Activated B cell treated with CpG ODN at 0.5 μM for 24 hours (primary cell): ENCODE measurements at regions of chr16 and their contacts with region 1.

Region 1: DNA sequence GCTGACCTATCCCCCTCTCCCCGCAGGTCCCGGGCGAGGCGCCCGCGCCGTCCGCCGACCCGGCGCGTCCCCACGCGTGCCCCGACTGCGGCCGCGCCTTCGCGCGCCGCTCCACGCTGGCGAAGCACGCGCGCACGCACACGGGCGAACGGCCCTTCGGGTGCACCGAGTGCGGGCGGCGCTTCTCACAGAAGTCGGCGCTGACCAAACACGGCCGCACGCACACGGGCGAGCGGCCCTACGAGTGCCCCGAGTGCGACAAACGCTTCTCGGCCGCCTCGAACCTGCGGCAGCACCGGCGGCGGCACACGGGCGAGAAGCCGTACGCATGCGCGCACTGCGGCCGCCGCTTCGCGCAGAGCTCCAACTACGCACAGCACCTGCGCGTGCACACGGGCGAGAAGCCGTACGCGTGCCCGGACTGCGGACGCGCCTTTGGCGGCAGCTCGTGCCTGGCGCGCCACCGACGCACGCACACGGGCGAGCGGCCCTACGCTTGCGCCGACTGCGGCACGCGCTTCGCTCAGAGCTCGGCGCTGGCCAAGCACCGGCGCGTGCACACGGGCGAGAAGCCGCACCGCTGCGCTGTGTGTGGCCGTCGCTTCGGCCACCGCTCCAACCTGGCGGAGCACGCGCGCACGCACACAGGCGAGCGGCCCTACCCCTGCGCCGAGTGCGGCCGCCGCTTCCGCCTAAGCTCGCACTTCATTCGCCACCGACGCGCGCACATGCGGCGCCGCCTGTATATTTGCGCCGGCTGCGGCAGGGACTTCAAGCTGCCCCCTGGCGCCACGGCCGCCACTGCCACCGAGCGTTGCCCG is 10.3 kb downstream of the ZNF771 start:
- DNase-seq: peak; percentile 84
- ATAC-seq: peak; percentile 86
- H3K4me3 Mint-ChIP-seq: peak overlapping the region; percentile 71
- H3K27ac Mint-ChIP-seq: peak overlapping the region; percentile 69
- H3K4me1 Mint-ChIP-seq: peaks cover 12% of the 10 kb centered on the region
- H3K27me3 Mint-ChIP-seq: no peaks in the 10 kb centered on the region
- CTCF ChIP-seq: no peak

Region 2: GRCh38 chr16:30142672-30143346 is 274.9 kb before region 1 on chr16:
- CTCF ChIA-PET with region 1: no interaction called
- POLR2A ChIA-PET with region 1: no interaction called
- intact Hi-C with region 1: no loop called
- DNase-seq: no peak
- ATAC-seq: peak; percentile 57
- H3K4me3 Mint-ChIP-seq: no peak overlapping the region
- H3K27ac Mint-ChIP-seq: no peak overlapping the region
- H3K4me1 Mint-ChIP-seq: peaks cover 12% of the 10 kb centered on the region
- H3K27me3 Mint-ChIP-seq: no peaks in the 10 kb centered on the region
- CTCF ChIP-seq: no peak

Region 3: DNA sequence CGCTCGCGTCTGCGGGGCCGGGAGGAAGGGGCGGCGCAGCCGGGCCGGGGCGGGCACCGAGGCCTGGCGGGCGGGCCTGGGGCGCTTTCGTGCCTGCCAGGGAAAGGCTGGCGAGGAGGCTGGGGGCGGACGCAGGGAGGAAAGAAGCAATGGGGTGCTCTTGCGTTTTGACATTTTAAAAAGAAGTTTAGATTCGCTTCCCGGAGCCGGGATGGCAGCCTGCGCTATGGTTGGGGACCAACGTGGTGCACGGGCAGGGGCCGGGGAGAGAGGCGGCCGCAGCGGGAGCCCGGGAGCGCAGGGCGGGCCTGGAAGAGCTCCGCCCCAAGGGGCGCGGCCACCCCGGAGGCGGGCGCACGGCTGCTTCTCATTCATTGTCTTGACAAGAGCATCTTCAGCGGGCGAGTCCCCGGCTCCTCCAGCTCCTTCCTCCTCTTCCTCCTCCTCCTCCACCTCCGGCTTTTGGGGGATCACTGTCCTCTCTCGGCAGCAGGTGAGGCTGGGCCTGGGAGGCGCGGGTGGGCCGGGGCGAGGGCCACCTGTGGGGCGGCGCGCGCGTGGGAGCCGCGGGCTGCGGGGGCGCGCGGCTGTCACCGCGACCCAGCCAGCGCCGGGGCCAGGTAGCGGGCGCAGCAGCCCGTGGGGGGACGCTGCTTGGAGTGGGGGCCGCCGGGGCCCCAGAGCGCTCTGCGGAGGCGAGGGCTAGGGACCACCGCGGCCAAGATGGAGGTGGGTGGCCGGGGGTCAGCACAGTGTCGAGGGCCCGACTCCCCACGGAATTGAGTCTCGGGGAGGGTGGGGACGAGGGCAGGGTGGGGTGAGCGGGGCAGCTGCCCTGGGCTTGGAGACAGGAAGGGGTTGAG is 234.3 kb before region 1 on chr16 and contains the start of gene CORO1A:
- CTCF ChIA-PET with region 1: no interaction called
- POLR2A ChIA-PET with region 1: interaction called, 10 read pairs
- intact Hi-C with region 1: no loop called
- DNase-seq: peak; percentile 86
- ATAC-seq: peak; percentile 60
- H3K4me3 Mint-ChIP-seq: peak within 1 kb of the TSS; percentile 98
- H3K27ac Mint-ChIP-seq: peak within 1 kb of the TSS; percentile 97
- H3K4me1 Mint-ChIP-seq: peaks cover 41% of the 10 kb centered on the region
- H3K27me3 Mint-ChIP-seq: no peaks in the 10 kb centered on the region
- CTCF ChIP-seq: no peak
- total RNA-seq, gene CORO1A: 1,030 and 1,060 TPM in 2 replicates

Region 4: DNA sequence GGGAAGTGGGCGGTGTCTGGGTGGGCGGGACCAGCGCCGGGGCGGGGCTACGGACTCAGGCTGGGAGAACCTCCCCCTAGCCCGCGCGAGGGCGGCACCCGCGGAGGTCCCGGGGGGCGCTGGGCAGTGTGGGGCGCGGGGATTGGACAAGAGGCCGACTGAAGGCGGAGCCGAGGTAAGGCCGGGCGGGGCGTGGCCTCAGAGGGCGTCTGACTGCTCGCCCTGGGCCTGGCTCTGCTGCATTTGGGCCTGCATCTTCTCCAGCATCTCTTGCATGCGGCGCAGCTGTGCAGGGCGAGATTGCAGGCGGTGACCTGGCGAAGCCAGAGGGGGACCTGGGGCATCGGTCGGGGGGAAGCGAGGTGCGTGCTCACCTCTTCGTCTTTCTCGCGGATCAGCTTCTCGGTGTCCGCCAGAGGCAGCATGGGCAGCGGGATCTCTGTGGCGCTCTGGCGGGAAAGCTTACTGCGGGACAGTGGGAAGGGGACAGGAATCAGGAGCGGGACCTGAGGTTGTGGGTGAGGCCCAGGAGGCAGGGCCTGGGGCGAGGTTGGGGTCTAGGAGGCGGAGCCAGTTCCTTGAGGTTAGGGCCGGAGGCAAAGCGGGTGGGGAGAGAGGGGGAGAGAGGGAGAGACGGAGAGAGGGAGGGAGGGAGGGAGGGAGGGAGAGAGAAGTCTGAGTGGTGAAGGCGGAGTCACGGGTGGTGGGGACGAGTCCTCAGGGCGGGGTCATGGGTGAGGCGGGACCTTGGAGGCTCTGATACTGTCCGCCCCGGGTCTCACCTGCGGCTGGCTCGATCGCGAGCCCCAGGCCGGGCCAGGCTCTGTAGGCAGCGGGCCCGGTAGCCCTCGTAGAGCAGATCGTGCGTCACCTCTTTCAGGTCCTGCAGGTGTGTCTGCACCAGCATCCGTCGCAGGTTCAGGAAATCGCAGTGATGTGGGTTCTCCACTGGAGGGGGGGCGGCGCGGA is 39.2 kb before region 1 on chr16:
- CTCF ChIA-PET with region 1: no interaction called
- POLR2A ChIA-PET with region 1: interaction called, 15 read pairs
- intact Hi-C with region 1: loop called (anchors 1 kb)
- DNase-seq: peak; percentile 99
- ATAC-seq: peak; percentile 88
- H3K4me3 Mint-ChIP-seq: peak overlapping the region; percentile 92
- H3K27ac Mint-ChIP-seq: peak overlapping the region; percentile 100
- H3K4me1 Mint-ChIP-seq: peaks cover 62% of the 10 kb centered on the region
- H3K27me3 Mint-ChIP-seq: no peaks in the 10 kb centered on the region
- CTCF ChIP-seq: no peak

Region 5: GRCh38 chr16:30407102-30407803 is 10.5 kb before region 1 on chr16 and contains the start of gene ZNF771:
- CTCF ChIA-PET with region 1: interaction called, 22 read pairs
- POLR2A ChIA-PET with region 1: interaction called, 34 read pairs
- intact Hi-C with region 1: no loop called
- DNase-seq: peak; percentile 90
- ATAC-seq: peak; percentile 89
- H3K4me3 Mint-ChIP-seq: peak within 1 kb of the TSS; percentile 89
- H3K27ac Mint-ChIP-seq: peak within 1 kb of the TSS; percentile 90
- H3K4me1 Mint-ChIP-seq: peaks cover 27% of the 10 kb centered on the region
- H3K27me3 Mint-ChIP-seq: no peaks in the 10 kb centered on the region
- CTCF ChIP-seq: no peak
- total RNA-seq, gene ZNF771: 4.4 and 5.2 TPM in 2 replicates

Region 6: GRCh38 chr16:30472328-30472942 is 54.7 kb after region 1 on chr16 and contains the start of gene ITGAL:
- CTCF ChIA-PET with region 1: interaction called, 4 read pairs
- POLR2A ChIA-PET with region 1: interaction called, 11 read pairs
- intact Hi-C with region 1: no loop called
- DNase-seq: peak; percentile 59
- ATAC-seq: peak; percentile 65
- H3K4me3 Mint-ChIP-seq: peak within 1 kb of the TSS; percentile 89
- H3K27ac Mint-ChIP-seq: peak within 1 kb of the TSS; percentile 94
- H3K4me1 Mint-ChIP-seq: peaks cover 60% of the 10 kb centered on the region
- H3K27me3 Mint-ChIP-seq: no peaks in the 10 kb centered on the region
- CTCF ChIP-seq: no peak
- total RNA-seq, gene ITGAL: 216 and 240 TPM in 2 replicates

Region 7: GRCh38 chr16:30609926-30610839 is 192.4 kb after region 1 on chr16 and contains the start of gene ZNF689:
- CTCF ChIA-PET with region 1: no interaction called
- POLR2A ChIA-PET with region 1: interaction called, 11 read pairs
- intact Hi-C with region 1: no loop called
- DNase-seq: peak; percentile 90
- ATAC-seq: peak; percentile 87
- H3K4me3 Mint-ChIP-seq: peak within 1 kb of the TSS; percentile 93
- H3K27ac Mint-ChIP-seq: peak within 1 kb of the TSS; percentile 95
- H3K4me1 Mint-ChIP-seq: peaks cover 19% of the 10 kb centered on the region
- H3K27me3 Mint-ChIP-seq: no peaks in the 10 kb centered on the region
- CTCF ChIP-seq: no peak
- total RNA-seq, gene ZNF689: 10.1 and 11.6 TPM in 2 replicates